Caco-2 (cell line): ENCODE measurements at regions of chr2 and their contacts with region 1.

Region 1: DNA sequence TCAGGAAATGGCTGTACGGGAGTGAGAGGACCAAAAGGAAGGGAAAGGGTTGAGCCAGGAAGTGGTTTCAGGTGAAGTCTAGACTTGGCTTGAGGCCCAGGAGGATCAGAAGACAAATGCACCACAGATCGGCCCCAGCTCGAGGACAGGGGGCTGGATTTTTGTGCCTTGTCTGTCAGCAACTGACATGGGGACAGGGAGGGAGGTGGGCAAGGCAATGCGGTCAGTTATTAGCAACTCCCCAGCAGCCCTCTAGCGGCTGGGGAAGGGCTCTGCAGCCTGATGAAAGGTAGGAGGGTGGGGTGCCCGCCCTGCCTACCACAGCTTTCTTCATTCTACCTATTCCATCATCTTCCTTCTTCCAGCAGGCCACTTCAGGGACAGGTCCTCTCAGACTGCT is 50.0 kb downstream of the CPO start:
- DNase-seq: peak; percentile 43 to 46
- H3K4me3 ChIP-seq: no peak overlapping the region
- H3K4me3 Mint-ChIP-seq: no peak overlapping the region
- H3K27ac Mint-ChIP-seq: no peak overlapping the region
- H3K4me1 ChIP-seq: no peaks in the 10 kb centered on the region
- H3K4me1 Mint-ChIP-seq: no peaks in the 10 kb centered on the region
- H3K27me3 ChIP-seq: no peaks in the 10 kb centered on the region
- H3K27me3 Mint-ChIP-seq: peaks cover 14% of the 10 kb centered on the region
- CTCF ChIP-seq: peak; percentile 87 to 92

Region 2: DNA sequence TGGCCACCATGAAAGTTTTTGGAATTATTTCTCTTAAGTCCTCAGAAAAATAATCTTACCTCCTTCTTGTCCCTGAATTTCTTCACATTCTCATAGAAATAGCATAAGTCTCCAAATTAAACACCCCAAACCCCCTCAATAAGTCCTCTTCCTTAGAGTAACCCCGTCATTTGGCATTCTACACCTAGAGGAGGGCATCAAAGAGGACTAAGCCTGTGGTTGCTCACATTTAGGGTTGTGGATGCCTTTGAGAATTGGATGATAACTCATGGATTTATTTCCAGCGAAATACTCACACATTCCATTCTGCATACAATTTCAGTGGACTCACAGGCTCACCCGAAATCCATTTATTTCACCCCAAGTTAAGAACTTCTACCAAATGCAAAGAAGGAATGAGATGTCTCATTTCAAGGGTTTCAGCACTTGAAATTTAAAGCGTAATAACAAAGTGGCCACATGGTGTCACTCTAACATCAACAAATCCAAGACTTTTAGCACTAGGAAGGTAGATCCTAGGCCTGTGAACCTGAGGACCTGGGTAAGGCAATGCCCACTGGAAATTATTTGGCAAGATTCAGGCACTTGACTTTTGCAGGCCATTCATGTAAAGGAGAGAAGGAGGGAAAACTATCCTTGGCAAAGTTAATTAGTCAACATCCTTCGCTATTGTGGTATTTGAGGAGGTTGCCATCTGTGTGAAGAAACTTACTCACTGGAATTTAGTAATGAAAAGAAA is 295.7 kb before region 1 on chr2:
- CTCF ChIA-PET with region 1: no interaction called
- POLR2A ChIA-PET with region 1: no interaction called
- intact Hi-C with region 1: loop called (anchors 1 kb)
- DNase-seq: peak in 1 of 2 experiments; percentile 62
- H3K4me3 ChIP-seq: no peak overlapping the region
- H3K4me3 Mint-ChIP-seq: no peak overlapping the region
- H3K27ac Mint-ChIP-seq: no peak overlapping the region
- H3K4me1 ChIP-seq: no peaks in the 10 kb centered on the region
- H3K4me1 Mint-ChIP-seq: no peaks in the 10 kb centered on the region
- H3K27me3 ChIP-seq: peaks cover 1% of the 10 kb centered on the region; the same call in 1 of the 2 replicates
- H3K27me3 Mint-ChIP-seq: peaks cover 27% of the 10 kb centered on the region
- CTCF ChIP-seq: peak; percentile 52 to 66